Right ventricle myocardium inferior (tissue), 1 donor: ENCODE measurements at regions of chr2 and their contacts with region 1.

Region 1: GRCh38 chr2:41782306-41783158 is 265.3 kb upstream of the PKDCC start:
- DNase-seq: no peak
- ATAC-seq: no peak

Region 2: GRCh38 chr2:41409328-41409727 is 373.2 kb before region 1 on chr2:
- intact Hi-C with region 1: loop called (anchors 5 kb)
- DNase-seq: no peak
- ATAC-seq: no peak

Region 3: GRCh38 chr2:41970988-41971660 is 188.6 kb after region 1 on chr2:
- intact Hi-C with region 1: no loop called
- DNase-seq: no peak
- ATAC-seq: no peak

Region 4: GRCh38 chr2:42095923-42096408 is 313.4 kb after region 1 on chr2:
- intact Hi-C with region 1: no loop called
- DNase-seq: peak; percentile 89
- ATAC-seq: peak; percentile 36